ENCODE measurements at regions of chr15 and their contacts with region 1.

Region 1: GRCh38 chr15:84924074-84924731 is 39.7 kb downstream of the SLC28A1 start:
- DNase-seq: no peak
- ATAC-seq: no peak
- H3K4me3 ChIP-seq: no peak overlapping the region
- H3K27ac ChIP-seq: no peak overlapping the region
- H3K4me1 ChIP-seq: peaks cover 0 to 15% (median 9%) of the 10 kb centered on the region in 12 donors
- H3K27me3 ChIP-seq: no peaks in the 10 kb centered on the region
- CTCF ChIP-seq: no peak
- POLR2A ChIP-seq: no peak

Region 2: DNA sequence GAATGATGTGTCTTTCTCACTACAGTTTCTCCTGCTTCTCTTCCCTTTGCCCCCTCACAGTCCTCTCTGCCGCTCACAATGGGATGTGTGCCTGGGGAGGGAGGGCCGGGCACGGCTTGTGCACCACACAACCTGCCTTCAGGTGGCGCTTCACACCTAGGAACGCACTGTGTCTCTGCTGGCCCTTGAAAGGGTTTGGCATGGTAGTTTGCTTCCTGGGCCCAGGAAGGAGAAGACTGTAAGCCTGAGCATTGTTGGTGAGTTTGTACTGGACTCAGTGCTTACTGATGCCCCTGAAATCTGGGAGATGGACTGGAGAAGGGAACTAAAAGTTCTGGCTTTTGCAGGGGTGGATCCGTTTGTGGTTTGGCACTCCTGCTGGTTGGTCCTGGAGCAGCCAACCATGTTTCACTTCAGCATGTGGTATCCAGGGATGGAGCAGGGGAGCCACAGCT is 97.8 kb before region 1 on chr15:
- intact Hi-C with region 1: loop called in 1 of 10 experiments (anchors 5 kb)
- DNase-seq: peak in 3 of 5 donors; percentile 38 to 47 (median 46)
- ATAC-seq: peak; percentile 16 to 37 (median 24)
- H3K4me3 ChIP-seq: no peak overlapping the region
- H3K27ac ChIP-seq: peak overlapping the region in 11 of 12 donors; percentile 54 to 99 (median 96)
- H3K4me1 ChIP-seq: peaks cover 10 to 100% (median 94%) of the 10 kb centered on the region in 12 donors
- H3K27me3 ChIP-seq: no peaks in the 10 kb centered on the region
- CTCF ChIP-seq: peak in 10 of 12 donors; percentile 8 to 43 (median 30)
- POLR2A ChIP-seq: no peak

Region 3: GRCh38 chr15:84846269-84846668 is 77.9 kb before region 1 on chr15:
- intact Hi-C with region 1: loop called in 7 of 10 experiments (anchors 1 to 5 kb)
- DNase-seq: peak in 1 of 5 donors; percentile 3
- ATAC-seq: no peak
- H3K4me3 ChIP-seq: no peak overlapping the region
- H3K27ac ChIP-seq: peak overlapping the region in 8 of 12 donors; percentile 1 to 99 (median 88)
- H3K4me1 ChIP-seq: peaks cover 0 to 37% (median 10%) of the 10 kb centered on the region in 12 donors
- H3K27me3 ChIP-seq: no peaks in the 10 kb centered on the region
- CTCF ChIP-seq: no peak
- POLR2A ChIP-seq: no peak

Region 4: GRCh38 chr15:84863565-84864443 is 60.4 kb before region 1 on chr15:
- intact Hi-C with region 1: loop called in 9 of 10 experiments (anchors 1 to 5 kb)
- DNase-seq: peak in 1 of 5 donors; percentile 47
- ATAC-seq: peak; percentile 24 to 40 (median 34)
- H3K4me3 ChIP-seq: peak overlapping the region in 6 of 12 donors; percentile 0 to 32 (median 17)
- H3K27ac ChIP-seq: peak overlapping the region in 11 of 12 donors; percentile 30 to 81 (median 52)
- H3K4me1 ChIP-seq: peaks cover 0 to 37% (median 20%) of the 10 kb centered on the region in 12 donors
- H3K27me3 ChIP-seq: no peaks in the 10 kb centered on the region
- CTCF ChIP-seq: peak in 10 of 12 donors; percentile 26 to 56 (median 42)
- POLR2A ChIP-seq: no peak

Region 5: GRCh38 chr15:84883916-84884768 is 40.1 kb before region 1 on chr15 and contains the start of gene SLC28A1:
- intact Hi-C with region 1: loop called in 2 of 10 experiments (anchors 5 kb)
- DNase-seq: peak in 2 of 5 donors; percentile 53 to 55
- ATAC-seq: peak; percentile 10 to 53 (median 25)
- H3K4me3 ChIP-seq: no peak within 1 kb of the TSS
- H3K27ac ChIP-seq: peak within 1 kb of the TSS in 10 of 12 donors; percentile 6 to 82 (median 70)
- H3K4me1 ChIP-seq: peaks cover 0 to 19% (median 8%) of the 10 kb centered on the region in 12 donors
- H3K27me3 ChIP-seq: no peaks in the 10 kb centered on the region
- CTCF ChIP-seq: no peak
- POLR2A ChIP-seq: no peak
- total RNA-seq, gene SLC28A1: 0.14 to 2.9 (median 0.74) TPM in 8 of 9 donors, not detected in the other

Measured in heart left ventricle (tissue), 16 donors.